Endothelial cell of umbilical vein (primary cell): ENCODE measurements at regions of chr1 and their contacts with region 1.

Region 1: DNA sequence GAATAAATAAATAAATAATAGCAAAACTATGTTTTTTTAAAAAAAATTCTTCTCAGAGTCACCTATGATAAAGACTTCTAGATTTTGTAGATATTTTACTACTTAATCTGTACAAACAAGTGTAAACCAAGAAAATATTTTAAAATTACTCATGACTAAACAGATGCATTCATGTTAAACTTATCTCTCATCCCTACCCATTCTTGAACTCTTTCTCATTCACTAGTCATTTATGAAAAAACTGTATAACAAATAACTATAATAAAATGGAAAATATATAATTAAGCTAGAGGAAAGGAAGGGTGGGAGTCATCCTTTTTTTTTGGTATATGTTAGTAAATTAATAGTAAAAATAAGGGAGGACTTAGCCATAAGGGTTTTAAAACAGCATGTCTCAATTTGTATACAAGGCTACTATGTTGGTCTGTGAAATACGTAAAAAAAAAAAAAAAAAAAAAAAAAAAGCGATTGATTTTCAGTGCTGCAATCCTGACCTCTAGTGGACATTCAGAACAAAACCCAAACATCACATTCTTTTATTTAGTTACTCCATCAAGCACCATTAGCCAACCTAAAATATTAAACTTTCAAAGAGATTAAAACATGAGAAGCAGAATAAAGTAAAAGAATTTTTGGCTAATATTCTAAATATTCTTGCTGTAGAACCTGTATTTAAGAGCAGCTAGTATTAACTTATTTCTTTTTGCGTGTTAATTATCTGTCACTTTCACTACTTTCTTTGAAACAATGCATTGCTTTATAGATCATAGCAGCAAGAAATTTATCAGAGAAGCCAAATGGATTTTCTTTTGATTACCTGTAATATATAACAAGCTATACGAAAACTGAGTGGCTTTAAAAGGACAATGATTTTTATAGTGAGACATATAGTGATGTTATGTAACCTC is 255.8 kb upstream of the CACYBP start:
- DNase-seq: peak; percentile 52
- H3K4me3 ChIP-seq: no peak overlapping the region
- H3K27ac ChIP-seq: no peak overlapping the region
- H3K4me1 ChIP-seq: no peaks in the 10 kb centered on the region
- H3K27me3 ChIP-seq: no peaks in the 10 kb centered on the region
- CTCF ChIP-seq: peak; percentile 26 to 47
- POLR2A ChIP-seq: no peak

Region 2: GRCh38 chr1:173420330-173420806 is 1323.5 kb before region 1 on chr1:
- CTCF ChIA-PET with region 1: no interaction called
- POLR2A ChIA-PET with region 1: no interaction called
- dilution Hi-C with region 1: no loop called
- intact Hi-C with region 1: loop called (anchors 2 kb)
- DNase-seq: peak; percentile 83
- H3K4me3 ChIP-seq: no peak overlapping the region
- H3K27ac ChIP-seq: no peak overlapping the region
- H3K4me1 ChIP-seq: peaks cover 5% of the 10 kb centered on the region
- H3K27me3 ChIP-seq: no peaks in the 10 kb centered on the region
- CTCF ChIP-seq: peak; percentile 63 to 76
- POLR2A ChIP-seq: no peak

Region 3: DNA sequence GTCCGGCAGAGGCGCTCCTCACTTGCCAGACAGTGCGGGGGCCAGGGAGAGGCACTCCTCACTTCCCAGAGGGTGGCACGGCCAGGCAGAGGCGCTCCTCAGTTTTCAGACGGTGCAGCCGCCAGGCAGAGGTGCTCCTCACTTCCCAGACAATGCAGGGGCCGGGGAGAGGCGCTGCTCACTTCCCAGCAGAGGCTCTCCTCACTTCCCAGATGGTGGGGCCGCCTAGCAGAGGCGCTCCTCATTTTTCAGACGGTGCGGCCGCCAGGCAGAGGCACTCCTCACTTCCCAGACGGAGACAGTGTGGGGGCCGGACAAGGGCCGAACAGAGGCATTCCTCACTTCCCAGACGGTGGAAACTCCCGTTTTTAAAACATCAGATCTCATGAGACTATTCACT is 17.4 kb after region 1 on chr1:
- CTCF ChIA-PET with region 1: interaction called, 10 read pairs
- POLR2A ChIA-PET with region 1: no interaction called
- dilution Hi-C with region 1: no loop called
- intact Hi-C with region 1: no loop called
- DNase-seq: no peak
- H3K4me3 ChIP-seq: no peak overlapping the region
- H3K27ac ChIP-seq: no peak overlapping the region
- H3K4me1 ChIP-seq: no peaks in the 10 kb centered on the region
- H3K27me3 ChIP-seq: no peaks in the 10 kb centered on the region
- CTCF ChIP-seq: no peak
- POLR2A ChIP-seq: no peak